ENCODE measurements at regions of chr1 and their contacts with region 1.

Region 1: GRCh38 chr1:36411674-36412520 is 14.2 kb upstream of the LSM10 start:
- DNase-seq: peak; percentile 70
- H3K4me3 Mint-ChIP-seq: no peak overlapping the region
- H3K27ac Mint-ChIP-seq: peak overlapping the region; percentile 88
- H3K4me1 Mint-ChIP-seq: peaks cover 25% of the 10 kb centered on the region
- H3K27me3 Mint-ChIP-seq: peaks cover 4% of the 10 kb centered on the region

Region 2: GRCh38 chr1:36248250-36248894 is 163.5 kb before region 1 on chr1:
- CTCF ChIA-PET with region 1: no interaction called
- DNase-seq: no peak
- H3K4me3 Mint-ChIP-seq: no peak overlapping the region
- H3K27ac Mint-ChIP-seq: no peak overlapping the region
- H3K4me1 Mint-ChIP-seq: peaks cover 9% of the 10 kb centered on the region
- H3K27me3 Mint-ChIP-seq: no peaks in the 10 kb centered on the region

Region 3: GRCh38 chr1:36385410-36386257 is 26.3 kb before region 1 on chr1 and contains the start of gene STK40:
- CTCF ChIA-PET with region 1: interaction called, 21 read pairs
- DNase-seq: peak; percentile 98
- H3K4me3 Mint-ChIP-seq: peak within 1 kb of the TSS; percentile 75
- H3K27ac Mint-ChIP-seq: peak within 1 kb of the TSS; percentile 100
- H3K4me1 Mint-ChIP-seq: peaks cover 59% of the 10 kb centered on the region
- H3K27me3 Mint-ChIP-seq: no peaks in the 10 kb centered on the region

Region 4: GRCh38 chr1:36436817-36437216 is 24.9 kb after region 1 on chr1:
- CTCF ChIA-PET with region 1: no interaction called
- DNase-seq: no peak
- H3K4me3 Mint-ChIP-seq: no peak overlapping the region
- H3K27ac Mint-ChIP-seq: no peak overlapping the region
- H3K4me1 Mint-ChIP-seq: no peaks in the 10 kb centered on the region
- H3K27me3 Mint-ChIP-seq: peaks cover 9% of the 10 kb centered on the region